HCT116 (cell line): ENCODE measurements at regions of chr10 and their contacts with region 1.

Region 1: GRCh38 chr10:30697806-30698205 is 68.3 kb upstream of the LYZL2 start:
- DNase-seq: no peak
- ATAC-seq: no peak
- H3K4me3 ChIP-seq: no peak overlapping the region
- H3K27ac ChIP-seq: no peak overlapping the region
- H3K4me1 ChIP-seq: peaks cover 8 to 35% of the 10 kb centered on the region in 2 experiments; a peak in 3 of 4 replicates
- H3K27me3 ChIP-seq: no peaks in the 10 kb centered on the region
- CTCF ChIP-seq: no peak
- POLR2A ChIP-seq: no peak
- RAD21 ChIP-seq: no peak

Region 2: DNA sequence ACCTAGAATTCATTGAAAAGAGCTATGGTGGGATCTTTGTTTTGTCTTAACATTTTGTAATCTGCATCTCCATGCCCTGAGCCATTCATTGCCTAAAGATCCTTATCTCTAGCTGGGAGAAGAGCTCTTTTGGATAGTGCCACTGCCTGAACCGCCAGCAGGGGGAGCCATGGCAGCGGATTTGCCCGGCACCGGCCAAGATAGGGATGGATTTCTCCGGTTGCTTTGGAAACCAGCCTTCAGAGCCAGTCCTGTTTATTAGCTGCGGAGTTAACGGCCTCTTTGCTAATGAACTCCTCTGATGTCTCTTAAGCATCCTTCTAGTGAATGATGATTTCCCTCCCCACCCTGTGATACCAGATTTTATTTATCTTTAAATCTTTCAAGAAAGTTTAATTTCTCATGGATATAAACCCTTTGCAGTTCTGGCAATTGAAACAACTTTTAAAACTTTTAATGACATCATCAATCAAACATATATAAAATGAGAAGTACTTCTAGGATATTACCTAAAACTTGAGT is 10.0 kb before region 1 on chr10:
- CTCF ChIA-PET with region 1: interaction called, 12 read pairs
- POLR2A ChIA-PET with region 1: interaction called, 3 read pairs
- RAD21 ChIA-PET with region 1: no interaction called
- intact Hi-C with region 1: no loop called
- DNase-seq: peak; percentile 54
- ATAC-seq: peak; percentile 99
- H3K4me3 ChIP-seq: no peak overlapping the region
- H3K27ac ChIP-seq: no peak overlapping the region
- H3K4me1 ChIP-seq: peaks cover 1 to 11% of the 10 kb centered on the region in 2 experiments
- H3K27me3 ChIP-seq: peaks cover 9% of the 10 kb centered on the region
- CTCF ChIP-seq: peak; percentile 71 to 98 (median 98); a peak in 5 of 6 replicates
- POLR2A ChIP-seq: no peak
- RAD21 ChIP-seq: peak; percentile 85